ENCODE measurements at regions of chr6 and their contacts with region 1.

Region 1: DNA sequence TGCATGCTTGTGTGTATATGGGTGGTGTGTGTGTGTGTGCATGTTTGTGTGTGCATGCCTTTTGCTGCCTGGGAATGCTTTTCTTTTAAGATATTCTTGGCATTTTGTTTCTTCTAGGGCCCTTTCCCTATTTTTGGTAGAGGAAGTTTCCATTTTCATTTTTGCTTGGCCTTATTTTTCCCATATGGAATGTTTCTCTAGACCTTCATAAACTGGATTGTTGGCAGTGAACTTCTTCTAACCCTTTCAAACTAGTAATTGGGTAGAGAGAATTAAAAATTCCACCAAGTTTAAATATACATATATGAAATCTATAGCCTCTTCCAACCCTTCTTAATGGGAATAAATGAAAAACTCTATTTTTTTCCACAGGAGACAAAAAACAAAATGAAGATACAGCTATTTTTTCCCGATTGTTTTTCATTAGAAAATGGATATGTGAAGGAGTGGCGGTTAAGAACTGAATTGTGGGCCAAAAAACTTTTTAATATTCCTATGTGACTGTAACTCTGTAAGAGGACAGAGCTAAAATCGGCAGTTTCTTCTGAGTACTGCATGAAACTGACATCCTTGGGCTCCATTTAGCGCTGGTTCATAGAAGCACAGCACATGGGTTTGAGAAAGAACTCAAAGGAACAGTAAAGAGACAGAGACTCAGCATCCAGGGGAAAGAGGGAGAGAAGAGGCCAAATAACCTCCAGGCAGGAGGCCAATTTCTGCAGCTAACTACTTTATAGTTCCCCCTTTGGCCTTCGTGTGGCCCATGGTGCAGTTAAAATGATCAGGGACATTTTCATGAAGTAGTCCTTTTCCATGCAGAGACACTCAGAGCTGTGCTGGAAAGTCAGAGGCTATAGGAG is 102.1 kb downstream of the TMEM170B start:
- DNase-seq: no peak
- ATAC-seq: no peak
- H3K4me3 ChIP-seq: no peak overlapping the region
- H3K27ac ChIP-seq: no peak overlapping the region
- H3K4me1 ChIP-seq: 0 out of 2 replicates have a peak, but pooled peaks cover 3% of the 10 kb centered on the region
- H3K27me3 ChIP-seq: no peaks in the 10 kb centered on the region
- CTCF ChIP-seq: no peak
- POLR2A ChIP-seq: no peak
- RAD21 ChIP-seq: no peak

Region 2: GRCh38 chr6:11685152-11686093 is 45.8 kb after region 1 on chr6:
- CTCF ChIA-PET with region 1: no interaction called
- POLR2A ChIA-PET with region 1: interaction called, 11 read pairs
- dilution Hi-C with region 1: no loop called
- in situ Hi-C with region 1: no loop called
- intact Hi-C with region 1: no loop called
- DNase-seq: peak; percentile 64
- ATAC-seq: peak; percentile 63
- H3K4me3 ChIP-seq: no peak overlapping the region
- H3K27ac ChIP-seq: no peak overlapping the region
- H3K4me1 ChIP-seq: peaks cover 8% of the 10 kb centered on the region
- H3K27me3 ChIP-seq: no peaks in the 10 kb centered on the region
- CTCF ChIP-seq: no peak
- POLR2A ChIP-seq: no peak
- RAD21 ChIP-seq: no peak